Panc1 (cell line): ENCODE measurements at regions of chr1 and their contacts with region 1.

Region 1: DNA sequence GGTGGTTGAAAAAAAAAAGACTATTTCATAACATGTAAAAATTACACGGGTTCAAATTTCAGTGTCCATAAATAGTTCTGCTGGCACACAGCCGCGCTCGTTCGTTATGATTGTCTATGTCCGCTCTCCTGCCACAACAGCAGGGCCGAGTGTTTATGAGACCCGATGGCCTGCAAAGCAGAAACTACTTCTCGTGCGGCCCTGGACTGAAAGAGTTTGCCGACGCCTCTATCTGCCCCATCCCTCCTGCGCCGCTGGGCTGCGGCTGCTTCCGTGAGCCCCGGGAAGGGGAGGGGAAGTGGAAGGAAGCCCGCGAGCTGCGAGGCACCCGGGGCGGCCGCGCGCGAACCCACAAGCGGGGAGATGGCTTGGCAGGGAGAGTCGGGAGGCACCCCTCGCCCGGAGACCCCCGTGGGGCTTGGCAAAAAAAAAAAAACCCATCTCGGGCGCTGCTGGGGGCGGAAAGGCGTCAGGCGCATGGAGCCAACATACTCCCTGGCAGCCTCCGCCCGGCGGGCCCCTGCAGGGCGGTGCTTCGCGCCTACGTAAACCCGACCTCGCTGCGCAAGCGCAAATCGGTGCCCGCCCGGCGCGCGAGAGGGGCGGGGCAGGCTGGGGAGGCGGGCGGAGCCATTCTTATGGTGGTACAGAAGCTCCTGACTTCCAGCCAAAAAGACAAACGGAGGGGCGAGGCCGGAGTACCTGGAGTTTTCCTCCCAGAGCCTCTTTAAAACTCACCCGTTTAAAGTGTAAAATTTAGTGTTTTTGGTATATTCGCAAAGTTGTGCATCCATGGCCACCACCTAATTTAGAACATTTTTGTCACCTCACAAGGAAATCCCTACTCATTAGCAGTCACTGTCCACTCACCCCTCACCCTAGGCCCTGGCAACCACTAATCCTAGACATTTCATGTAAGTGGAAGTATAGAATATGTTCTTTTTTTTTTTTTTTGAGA is 8.3 kb downstream of the SLC27A3 start:
- DNase-seq: peak; percentile 54
- ATAC-seq: peak; percentile 97
- H3K4me3 ChIP-seq: peak overlapping the region; percentile 75
- H3K27ac ChIP-seq: peak overlapping the region; percentile 80
- H3K4me1 ChIP-seq: peaks cover 6% of the 10 kb centered on the region; the same call in 1 of the 2 replicates
- H3K27me3 ChIP-seq: no peaks in the 10 kb centered on the region
- CTCF ChIP-seq: no peak

Region 2: DNA sequence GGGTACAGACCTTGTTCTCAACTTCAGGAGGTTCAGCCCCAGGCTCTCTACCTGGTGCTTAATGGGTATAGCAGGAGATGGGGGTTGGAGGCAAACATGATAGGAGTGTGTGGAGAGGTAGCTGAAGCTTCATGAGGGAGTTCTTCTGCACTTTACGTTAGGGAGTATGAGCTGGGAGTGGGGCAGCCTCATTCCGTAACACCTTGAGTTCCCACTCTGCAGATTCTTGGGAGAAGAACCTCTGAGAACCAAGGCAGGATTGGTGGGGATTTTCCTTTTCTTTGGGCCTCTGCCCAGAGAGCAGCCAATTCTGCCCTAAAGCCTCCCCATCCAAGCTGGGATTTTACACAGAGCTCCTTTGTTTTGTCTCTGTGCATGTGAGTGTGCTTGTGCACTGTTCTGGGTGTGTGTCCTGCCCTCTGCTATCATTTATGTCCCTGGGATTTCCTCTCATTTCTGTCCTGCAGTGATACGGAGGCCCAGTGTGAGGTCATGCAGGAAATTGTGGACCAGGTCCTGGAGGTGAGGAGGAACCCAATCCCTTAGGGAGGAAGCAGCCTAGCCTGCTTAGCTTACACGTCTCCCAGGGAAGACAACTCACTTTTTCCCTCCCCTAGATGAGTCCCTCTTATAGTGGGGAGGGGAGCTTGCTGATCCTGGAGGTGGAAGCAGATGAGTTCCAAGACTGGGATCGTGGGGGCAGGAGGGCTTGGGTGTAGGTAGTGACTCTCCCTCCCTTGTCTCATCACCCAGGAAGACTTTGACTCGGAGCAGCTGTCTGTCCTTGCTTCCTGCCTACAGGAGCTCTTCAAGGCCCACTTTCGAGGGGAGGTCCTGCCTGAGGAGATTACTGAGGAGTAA is 19.9 kb before region 1 on chr1:
- CTCF ChIA-PET with region 1: no interaction called
- POLR2A ChIA-PET with region 1: interaction called, 10 read pairs
- in situ Hi-C with region 1: no loop called
- intact Hi-C with region 1: no loop called
- DNase-seq: no peak
- ATAC-seq: no peak
- H3K4me3 ChIP-seq: no peak overlapping the region
- H3K27ac ChIP-seq: no peak overlapping the region
- H3K4me1 ChIP-seq: no peaks in the 10 kb centered on the region
- H3K27me3 ChIP-seq: no peaks in the 10 kb centered on the region
- CTCF ChIP-seq: no peak

Region 3: DNA sequence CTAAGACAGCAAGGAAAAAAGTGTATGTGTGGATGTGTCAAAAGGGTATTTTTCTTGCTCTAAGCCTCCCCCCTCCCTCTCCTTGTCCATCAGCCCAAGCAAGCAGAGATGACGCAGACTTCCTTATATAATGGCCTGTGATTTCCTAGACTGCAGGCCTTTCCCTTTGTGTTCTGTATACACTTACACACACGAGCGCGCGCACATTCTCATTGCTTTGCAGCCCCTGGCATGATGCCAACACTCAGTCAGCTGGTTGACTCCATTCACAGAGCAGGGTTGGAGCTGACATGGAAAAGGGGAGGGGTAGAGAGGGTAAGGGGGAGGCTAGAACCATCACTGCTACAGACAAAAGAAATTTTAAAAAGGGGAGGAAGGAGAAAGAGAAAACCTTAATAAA is 97.5 kb after region 1 on chr1:
- CTCF ChIA-PET with region 1: no interaction called
- POLR2A ChIA-PET with region 1: no interaction called
- in situ Hi-C with region 1: no loop called
- intact Hi-C with region 1: no loop called
- DNase-seq: no peak
- ATAC-seq: peak; percentile 62
- H3K4me3 ChIP-seq: no peak overlapping the region; a peak in 1 of 4 replicates
- H3K27ac ChIP-seq: no peak overlapping the region
- H3K4me1 ChIP-seq: peaks cover 23% of the 10 kb centered on the region
- H3K27me3 ChIP-seq: no peaks in the 10 kb centered on the region
- CTCF ChIP-seq: no peak

Region 4: GRCh38 chr1:153903841-153904455 is 120.4 kb after region 1 on chr1:
- CTCF ChIA-PET with region 1: no interaction called
- POLR2A ChIA-PET with region 1: no interaction called
- in situ Hi-C with region 1: no loop called
- intact Hi-C with region 1: no loop called
- DNase-seq: no peak
- ATAC-seq: no peak
- H3K4me3 ChIP-seq: no peak overlapping the region
- H3K27ac ChIP-seq: no peak overlapping the region
- H3K4me1 ChIP-seq: no peaks in the 10 kb centered on the region
- H3K27me3 ChIP-seq: no peaks in the 10 kb centered on the region
- CTCF ChIP-seq: no peak

Region 5: GRCh38 chr1:154137888-154138287 is 354.4 kb after region 1 on chr1:
- CTCF ChIA-PET with region 1: no interaction called
- POLR2A ChIA-PET with region 1: no interaction called
- in situ Hi-C with region 1: no loop called
- intact Hi-C with region 1: no loop called
- DNase-seq: no peak
- ATAC-seq: no peak
- H3K4me3 ChIP-seq: no peak overlapping the region
- H3K27ac ChIP-seq: no peak overlapping the region
- H3K4me1 ChIP-seq: no peaks in the 10 kb centered on the region
- H3K27me3 ChIP-seq: no peaks in the 10 kb centered on the region
- CTCF ChIP-seq: no peak